Heart left ventricle (tissue), 16 donors: ENCODE measurements at regions of chr19 and their contacts with region 1.

Region 1: DNA sequence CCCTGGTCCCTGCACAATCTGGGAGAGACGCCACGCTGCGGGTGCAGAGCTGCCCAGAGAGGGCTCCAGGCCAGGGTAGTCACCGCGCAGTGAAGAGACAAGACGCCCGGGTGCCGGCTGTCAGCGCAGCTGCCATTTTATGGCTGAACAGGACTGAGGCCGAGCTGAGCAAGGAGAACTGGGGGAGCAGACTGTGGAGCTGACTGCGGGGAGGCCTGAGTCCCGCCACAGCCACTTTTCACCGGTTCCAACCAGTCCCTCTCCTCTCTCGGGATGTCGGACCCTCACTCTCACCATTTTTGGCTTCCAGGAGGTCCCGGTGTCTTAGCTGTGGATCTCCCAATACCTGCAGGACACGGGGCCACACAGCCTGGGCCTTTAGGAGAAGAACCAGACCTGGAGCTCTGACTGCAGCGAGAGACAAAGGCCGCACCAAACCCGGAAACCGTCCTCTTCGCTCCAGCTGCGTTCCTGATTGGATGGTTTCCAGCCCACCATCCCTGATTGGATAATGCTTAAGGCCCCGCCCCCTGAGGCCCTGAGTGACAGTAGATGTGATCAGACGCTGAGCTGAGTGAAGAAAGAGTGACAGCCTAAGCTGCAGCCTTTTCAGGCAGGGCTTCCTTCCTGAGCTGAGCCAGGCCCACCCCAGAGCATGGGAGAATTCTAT is at the start of gene ZNF626:
- DNase-seq: peak; percentile 95 to 99 (median 98)
- ATAC-seq: peak; percentile 99 to 100 (median 99)
- H3K4me3 ChIP-seq: peak within 1 kb of the TSS; percentile 66 to 93 (median 80)
- H3K27ac ChIP-seq: peak within 1 kb of the TSS; percentile 51 to 89 (median 86)
- H3K4me1 ChIP-seq: peaks cover 0 to 50% (median 26%) of the 10 kb centered on the region in 12 donors
- H3K27me3 ChIP-seq: no peaks in the 10 kb centered on the region
- CTCF ChIP-seq: no peak
- POLR2A ChIP-seq: peak in 1 of 2 donors; percentile 87
- total RNA-seq, gene ZNF626: 6.9 to 14.8 (median 9.6) TPM

Region 2: DNA sequence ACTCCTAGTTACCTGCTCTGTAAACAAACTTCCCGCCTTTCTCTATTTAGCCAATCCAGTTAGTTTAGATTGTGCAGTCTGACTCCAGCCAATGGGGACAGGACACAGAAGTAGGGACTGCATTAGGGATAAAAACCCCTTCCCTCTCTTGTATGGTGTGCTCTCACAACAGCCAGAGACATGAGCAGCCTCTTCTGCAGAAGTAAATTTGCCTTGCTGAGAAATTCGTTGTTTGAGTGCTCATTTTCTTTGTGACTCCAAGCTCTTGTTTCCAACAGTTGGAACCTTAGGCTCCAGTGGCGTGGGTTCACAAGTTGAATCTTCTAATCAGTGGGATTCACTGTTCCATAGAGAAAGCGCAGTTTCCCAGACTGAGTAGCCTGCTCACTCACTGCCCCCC is 694.4 kb before region 1 on chr19:
- intact Hi-C with region 1: no loop called
- DNase-seq: no peak
- ATAC-seq: no peak
- H3K4me3 ChIP-seq: no peak overlapping the region
- H3K27ac ChIP-seq: no peak overlapping the region
- H3K4me1 ChIP-seq: no peaks in the 10 kb centered on the region
- H3K27me3 ChIP-seq: no peaks in the 10 kb centered on the region
- CTCF ChIP-seq: no peak
- POLR2A ChIP-seq: no peak

Region 3: GRCh38 chr19:20423381-20424197 is 237.7 kb before region 1 on chr19:
- intact Hi-C with region 1: loop called in 1 of 10 experiments (anchors 5 kb)
- DNase-seq: peak; percentile 43 to 73 (median 52)
- ATAC-seq: peak in 3 of 4 donors; percentile 62 to 84 (median 67)
- H3K4me3 ChIP-seq: peak overlapping the region; percentile 28 to 75 (median 64)
- H3K27ac ChIP-seq: peak overlapping the region; percentile 58 to 88 (median 80)
- H3K4me1 ChIP-seq: peaks cover 0 to 4% (median 0%) of the 10 kb centered on the region in 12 donors
- H3K27me3 ChIP-seq: no peaks in the 10 kb centered on the region
- CTCF ChIP-seq: no peak
- POLR2A ChIP-seq: no peak

Region 4: GRCh38 chr19:20470345-20471134 is 190.7 kb before region 1 on chr19:
- intact Hi-C with region 1: no loop called
- DNase-seq: no peak
- ATAC-seq: no peak
- H3K4me3 ChIP-seq: no peak overlapping the region
- H3K27ac ChIP-seq: no peak overlapping the region
- H3K4me1 ChIP-seq: no peaks in the 10 kb centered on the region
- H3K27me3 ChIP-seq: no peaks in the 10 kb centered on the region
- CTCF ChIP-seq: no peak
- POLR2A ChIP-seq: no peak

Region 5: GRCh38 chr19:20565321-20566018 is 95.8 kb before region 1 on chr19 and contains the start of gene ZNF737:
- intact Hi-C with region 1: loop called in 6 of 10 experiments (anchors 2 to 10 kb)
- DNase-seq: peak; percentile 96 to 98 (median 97)
- ATAC-seq: peak; percentile 95 to 99 (median 98)
- H3K4me3 ChIP-seq: peak within 1 kb of the TSS; percentile 46 to 87 (median 70)
- H3K27ac ChIP-seq: peak within 1 kb of the TSS; percentile 51 to 94 (median 89)
- H3K4me1 ChIP-seq: peaks cover 0 to 17% (median 7%) of the 10 kb centered on the region in 12 donors
- H3K27me3 ChIP-seq: no peaks in the 10 kb centered on the region
- CTCF ChIP-seq: peak in 10 of 12 donors; percentile 17 to 57 (median 38)
- POLR2A ChIP-seq: peak in 1 of 2 donors; percentile 77
- total RNA-seq, gene ZNF737: 2.7 to 8.8 (median 5.3) TPM

Region 6: GRCh38 chr19:20776083-20777076 is 115.1 kb after region 1 on chr19 and contains the start of gene ZNF66:
- intact Hi-C with region 1: loop called in 3 of 10 experiments (anchors 2 to 10 kb)
- DNase-seq: peak; percentile 96 to 99 (median 97)
- ATAC-seq: peak; percentile 100
- H3K4me3 ChIP-seq: peak within 1 kb of the TSS; percentile 58 to 96 (median 76)
- H3K27ac ChIP-seq: peak within 1 kb of the TSS in 9 of 12 donors; percentile 11 to 62 (median 43)
- H3K4me1 ChIP-seq: peaks cover 0 to 14% (median 3%) of the 10 kb centered on the region in 12 donors
- H3K27me3 ChIP-seq: no peaks in the 10 kb centered on the region
- CTCF ChIP-seq: no peak
- POLR2A ChIP-seq: peak in 1 of 2 donors; percentile 82
- total RNA-seq, gene ZNF66: 0.35 to 3.7 (median 1.5) TPM

Region 7: GRCh38 chr19:20787766-20788165 is 126.5 kb after region 1 on chr19:
- intact Hi-C with region 1: no loop called
- DNase-seq: no peak
- ATAC-seq: no peak
- H3K4me3 ChIP-seq: no peak overlapping the region
- H3K27ac ChIP-seq: no peak overlapping the region
- H3K4me1 ChIP-seq: no peaks in the 10 kb centered on the region
- H3K27me3 ChIP-seq: no peaks in the 10 kb centered on the region
- CTCF ChIP-seq: no peak
- POLR2A ChIP-seq: no peak